ENCODE measurements at regions of chr11 and their contacts with region 1.

Region 1: GRCh38 chr11:108664730-108665525 is at the start of gene DDX10:
- DNase-seq: peak; percentile 95
- ATAC-seq: peak; percentile 100
- H3K4me3 Mint-ChIP-seq: peak within 1 kb of the TSS; percentile 100
- H3K27ac Mint-ChIP-seq: peak within 1 kb of the TSS; percentile 96
- H3K4me1 Mint-ChIP-seq: peaks cover 46% of the 10 kb centered on the region
- H3K27me3 Mint-ChIP-seq: no peaks in the 10 kb centered on the region
- CTCF ChIP-seq: no peak
- total RNA-seq, gene DDX10: 37.7 and 43.3 TPM in 2 replicates

Region 2: DNA sequence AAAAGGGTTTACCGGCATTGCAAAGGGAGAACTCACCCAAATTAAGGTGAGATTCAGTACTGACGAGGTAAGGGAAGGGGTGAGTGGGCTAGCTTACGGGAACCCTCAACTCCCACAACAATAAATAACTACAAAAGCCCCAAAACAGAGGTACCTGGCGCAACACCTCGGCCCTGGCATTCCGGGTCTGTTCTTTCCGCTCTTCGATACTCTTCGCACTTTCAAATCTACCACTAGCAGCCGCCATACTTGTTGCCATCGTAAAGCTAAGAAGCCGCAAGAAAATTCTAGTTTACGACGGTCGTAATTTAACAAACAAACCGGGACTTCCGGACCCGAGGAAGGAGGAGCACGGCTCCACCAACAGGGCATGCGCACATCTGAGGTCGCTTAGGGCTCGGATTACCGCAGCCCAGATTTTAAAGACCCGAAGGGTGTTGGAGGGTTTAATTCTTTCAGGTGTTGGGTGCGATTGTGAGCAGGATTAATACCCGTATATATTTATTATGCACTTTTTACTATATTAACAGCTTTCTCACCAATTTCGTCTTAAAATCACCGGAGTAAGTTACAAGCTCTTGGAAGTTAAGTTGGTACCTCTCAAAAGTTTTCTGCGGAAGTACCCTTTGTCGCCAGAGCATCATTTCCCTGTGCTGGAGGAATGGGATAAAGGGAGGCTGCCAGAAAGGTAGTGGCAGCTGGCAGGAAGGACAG is 1207.2 kb before region 1 on chr11 and contains the start of gene CWF19L2:
- CTCF ChIA-PET with region 1: no interaction called
- POLR2A ChIA-PET with region 1: interaction called, 8 read pairs
- intact Hi-C with region 1: loop called (anchors 2 kb)
- DNase-seq: peak; percentile 67
- ATAC-seq: peak; percentile 96
- H3K4me3 Mint-ChIP-seq: peak within 1 kb of the TSS; percentile 90
- H3K27ac Mint-ChIP-seq: peak within 1 kb of the TSS; percentile 93
- H3K4me1 Mint-ChIP-seq: peaks cover 25% of the 10 kb centered on the region
- H3K27me3 Mint-ChIP-seq: peaks cover 3% of the 10 kb centered on the region
- CTCF ChIP-seq: no peak
- total RNA-seq, gene CWF19L2: 24.5 and 26.1 TPM in 2 replicates

Region 3: DNA sequence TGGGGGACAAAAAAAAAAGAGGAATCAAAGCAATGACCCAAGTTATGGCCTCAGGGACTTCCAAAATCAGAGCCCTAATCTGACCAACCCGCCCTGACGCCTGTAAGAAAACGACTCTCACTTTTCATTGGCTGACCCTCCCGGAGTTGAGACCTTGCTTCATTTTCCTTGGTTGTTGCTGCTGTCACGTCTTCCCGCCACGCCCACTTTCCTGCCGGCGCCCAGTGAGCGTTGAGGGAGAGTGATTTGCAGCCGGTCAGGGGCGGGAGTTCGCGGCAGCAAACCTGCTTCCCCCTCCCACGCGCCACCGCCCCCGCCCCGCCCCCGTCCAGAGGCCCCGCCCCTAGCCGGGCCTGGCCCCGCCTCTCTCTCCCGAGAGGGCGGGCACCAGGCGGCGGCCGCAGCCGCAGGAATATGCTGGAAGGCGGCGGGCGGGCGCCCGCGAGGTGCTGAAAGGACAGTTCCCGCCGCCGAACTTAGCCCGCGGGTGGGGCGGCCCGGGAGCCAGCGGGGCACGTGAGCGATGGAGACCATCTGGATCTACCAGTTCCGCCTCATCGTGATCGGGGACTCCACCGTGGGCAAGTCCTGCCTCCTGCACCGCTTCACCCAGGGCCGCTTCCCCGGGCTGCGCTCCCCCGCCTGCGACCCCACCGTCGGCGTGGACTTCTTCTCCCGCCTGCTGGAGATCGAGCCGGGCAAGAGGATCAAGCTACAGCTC is 736.7 kb before region 1 on chr11 and contains the start of gene RAB39A:
- CTCF ChIA-PET with region 1: no interaction called
- POLR2A ChIA-PET with region 1: no interaction called
- intact Hi-C with region 1: loop called (anchors 5 kb)
- DNase-seq: peak; percentile 82
- ATAC-seq: peak; percentile 87
- H3K4me3 Mint-ChIP-seq: peak within 1 kb of the TSS; percentile 91
- H3K27ac Mint-ChIP-seq: peak within 1 kb of the TSS; percentile 80
- H3K4me1 Mint-ChIP-seq: peaks cover 37% of the 10 kb centered on the region
- H3K27me3 Mint-ChIP-seq: peaks cover 4% of the 10 kb centered on the region
- CTCF ChIP-seq: no peak
- total RNA-seq, gene RAB39A: 3.6 and 4.1 TPM in 2 replicates

Region 4: DNA sequence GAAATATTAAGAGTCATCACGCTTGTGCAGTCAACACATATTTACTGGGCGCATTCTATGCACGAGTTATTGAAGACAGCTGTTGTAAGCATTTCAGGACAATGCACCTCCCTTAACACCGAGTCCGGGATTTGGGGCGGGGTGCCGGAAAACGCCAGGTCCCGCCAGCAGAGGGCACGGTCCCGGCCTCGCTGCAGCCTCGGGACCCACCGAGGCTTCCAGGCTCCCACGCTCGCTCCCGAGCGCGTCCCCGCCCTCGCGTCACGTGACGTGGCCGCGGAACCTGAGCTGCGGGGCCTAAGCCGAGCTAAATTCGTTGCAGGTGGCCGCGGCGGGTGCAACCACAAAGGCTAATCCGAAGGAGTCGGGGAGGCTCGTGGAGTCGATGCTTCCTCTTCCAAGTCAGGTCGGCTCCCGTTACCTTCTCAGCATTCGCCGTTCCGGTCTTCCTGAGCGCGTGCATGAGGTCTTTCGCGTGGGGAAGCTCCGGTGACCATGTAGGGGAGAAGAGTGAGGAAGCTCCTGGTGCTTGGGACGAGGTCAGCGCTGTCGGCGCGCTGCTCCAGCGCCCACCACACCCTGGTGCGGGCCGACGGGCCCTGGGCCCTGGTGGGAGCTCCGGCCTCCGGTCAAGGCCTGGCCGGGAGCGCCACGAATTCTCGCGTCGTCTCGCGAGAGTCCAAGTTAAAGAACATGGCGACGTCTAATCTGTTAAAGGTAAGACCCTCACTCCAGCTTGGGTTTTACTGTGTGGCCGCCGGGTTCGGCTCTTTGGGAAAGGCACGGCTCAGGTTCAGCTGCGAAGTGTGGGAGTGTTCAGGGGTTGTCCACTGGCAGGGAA is 656.1 kb before region 1 on chr11 and contains the start of gene CUL5:
- CTCF ChIA-PET with region 1: no interaction called
- POLR2A ChIA-PET with region 1: interaction called, 4 read pairs
- intact Hi-C with region 1: loop called (anchors 5 kb)
- DNase-seq: peak; percentile 89
- ATAC-seq: peak; percentile 87
- H3K4me3 Mint-ChIP-seq: peak within 1 kb of the TSS; percentile 99
- H3K27ac Mint-ChIP-seq: peak within 1 kb of the TSS; percentile 96
- H3K4me1 Mint-ChIP-seq: peaks cover 10% of the 10 kb centered on the region
- H3K27me3 Mint-ChIP-seq: no peaks in the 10 kb centered on the region
- CTCF ChIP-seq: no peak
- total RNA-seq, gene CUL5: 38.4 and 42.0 TPM in 2 replicates

Region 5: GRCh38 chr11:108160970-108161566 is 503.9 kb before region 1 on chr11:
- CTCF ChIA-PET with region 1: no interaction called
- POLR2A ChIA-PET with region 1: no interaction called
- intact Hi-C with region 1: loop called (anchors 1 kb)
- DNase-seq: no peak
- ATAC-seq: peak; percentile 100
- H3K4me3 Mint-ChIP-seq: no peak overlapping the region
- H3K27ac Mint-ChIP-seq: peak overlapping the region; percentile 87
- H3K4me1 Mint-ChIP-seq: peaks cover 13% of the 10 kb centered on the region
- H3K27me3 Mint-ChIP-seq: no peaks in the 10 kb centered on the region
- CTCF ChIP-seq: no peak

Region 6: DNA sequence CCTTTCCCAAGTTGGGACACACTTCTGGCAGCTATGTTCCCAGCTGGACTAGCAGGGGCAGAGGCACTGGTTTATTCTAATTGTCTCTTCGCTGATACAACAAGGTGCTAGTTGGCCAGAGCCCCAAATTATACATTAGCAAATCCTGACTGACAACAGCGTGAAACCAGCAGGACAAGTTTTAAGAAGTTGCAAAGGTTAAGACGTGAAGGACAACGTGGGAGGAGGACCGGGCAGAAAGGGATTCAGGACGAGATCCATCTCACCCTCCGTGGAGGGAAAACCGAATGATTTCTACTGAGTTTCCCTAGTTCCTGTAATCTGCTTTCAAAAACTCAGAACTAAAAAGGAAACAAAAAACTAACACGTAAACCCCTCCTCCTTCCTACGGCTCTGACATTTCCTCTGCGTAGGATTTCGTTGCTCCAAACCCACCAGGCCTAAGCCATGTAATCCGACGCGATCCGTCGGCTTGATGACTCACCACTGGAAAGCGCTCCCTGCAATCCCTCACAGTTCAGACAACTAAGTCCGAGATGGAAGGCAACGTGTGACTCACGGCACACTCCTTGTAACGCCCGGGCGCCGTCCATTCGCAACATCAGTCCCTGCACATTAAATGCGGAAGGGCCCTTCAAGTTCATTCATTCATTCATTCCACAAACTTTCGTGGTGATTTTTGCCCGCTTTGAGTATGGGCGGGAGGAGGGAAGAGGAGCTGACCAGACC is 167.4 kb before region 1 on chr11:
- CTCF ChIA-PET with region 1: no interaction called
- POLR2A ChIA-PET with region 1: no interaction called
- intact Hi-C with region 1: loop called (anchors 2 kb)
- DNase-seq: peak; percentile 51
- ATAC-seq: peak; percentile 71
- H3K4me3 Mint-ChIP-seq: peak overlapping the region; percentile 100
- H3K27ac Mint-ChIP-seq: peak overlapping the region; percentile 97
- H3K4me1 Mint-ChIP-seq: peaks cover 15% of the 10 kb centered on the region
- H3K27me3 Mint-ChIP-seq: no peaks in the 10 kb centered on the region
- CTCF ChIP-seq: no peak

Region 7: GRCh38 chr11:108593214-108593922 is 71.6 kb before region 1 on chr11 and contains the start of gene EXPH5:
- CTCF ChIA-PET with region 1: no interaction called
- POLR2A ChIA-PET with region 1: interaction called, 3 read pairs
- intact Hi-C with region 1: loop called (anchors 2 kb)
- DNase-seq: peak; percentile 47
- ATAC-seq: peak; percentile 96
- H3K4me3 Mint-ChIP-seq: peak within 1 kb of the TSS; percentile 93
- H3K27ac Mint-ChIP-seq: peak within 1 kb of the TSS; percentile 55
- H3K4me1 Mint-ChIP-seq: peaks cover 14% of the 10 kb centered on the region
- H3K27me3 Mint-ChIP-seq: peaks cover 42% of the 10 kb centered on the region
- CTCF ChIP-seq: no peak
- total RNA-seq, gene EXPH5: 0.27 and 0.29 TPM in 2 replicates

Region 8: DNA sequence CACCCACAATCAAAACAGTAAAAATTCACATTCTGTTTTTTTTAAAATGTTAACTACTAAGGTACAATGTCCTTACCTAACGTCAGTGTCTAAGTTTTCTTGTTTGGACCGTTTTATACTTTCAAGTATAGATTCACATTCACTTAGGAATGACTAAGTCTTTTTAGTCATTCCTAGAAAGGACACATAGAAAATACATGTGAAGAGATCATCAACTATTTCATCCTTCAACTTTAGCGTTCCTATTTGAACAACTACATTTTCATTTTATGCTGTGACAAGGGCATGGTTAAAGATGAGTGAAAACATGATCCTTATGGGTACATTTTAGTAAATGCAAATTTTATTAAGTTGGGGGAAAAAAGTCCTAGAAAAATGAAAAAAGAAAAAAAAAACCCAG is 62.7 kb after region 1 on chr11:
- CTCF ChIA-PET with region 1: no interaction called
- POLR2A ChIA-PET with region 1: no interaction called
- intact Hi-C with region 1: no loop called
- DNase-seq: no peak
- ATAC-seq: no peak
- H3K4me3 Mint-ChIP-seq: no peak overlapping the region
- H3K27ac Mint-ChIP-seq: no peak overlapping the region
- H3K4me1 Mint-ChIP-seq: peaks cover 33% of the 10 kb centered on the region
- H3K27me3 Mint-ChIP-seq: no peaks in the 10 kb centered on the region
- CTCF ChIP-seq: no peak

Measured in activated B cell treated with CpG ODN at 0.5 μM for 24 hours (primary cell).